ENCODE measurements at regions of chr7 and their contacts with region 1.

Region 1: DNA sequence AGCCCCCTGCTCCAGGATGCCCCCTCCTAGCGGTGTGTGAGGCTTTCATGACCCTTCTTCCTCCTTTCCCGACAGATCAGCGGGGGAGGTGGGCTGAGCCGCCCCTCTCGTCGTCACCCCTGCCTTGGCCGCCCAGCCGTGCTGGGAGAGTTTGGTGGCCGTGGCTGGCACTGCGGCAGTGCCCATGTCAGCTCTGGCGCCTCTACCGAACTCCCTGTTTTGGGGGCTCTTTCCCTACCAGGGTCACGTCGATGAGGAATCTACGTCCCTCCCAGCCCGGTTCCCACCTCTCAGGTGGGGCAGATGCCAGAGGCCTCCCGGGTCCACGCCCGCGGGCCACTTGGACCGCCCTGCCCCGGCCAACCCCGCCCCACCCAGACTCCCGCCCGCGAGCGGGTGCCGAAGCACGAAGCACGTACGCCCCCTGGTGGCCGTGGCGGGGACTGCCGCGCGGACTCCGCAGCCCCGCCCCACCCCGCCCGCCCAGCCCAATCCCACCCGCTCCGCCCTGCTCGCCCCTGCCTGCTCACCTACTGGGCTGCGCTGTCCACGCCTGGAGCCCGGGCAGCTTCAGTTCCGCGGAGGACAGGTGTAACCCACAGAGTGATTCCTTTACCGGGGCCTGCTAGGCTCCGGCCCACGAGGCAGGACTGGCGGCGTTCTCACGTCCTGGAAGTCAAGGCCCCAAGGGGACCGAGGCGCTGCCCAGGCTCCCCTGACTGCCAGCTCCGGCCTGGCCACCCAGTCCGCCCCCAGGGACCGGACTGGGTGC is 127.1 kb downstream of the UBE2H start:
- DNase-seq: peak; percentile 94
- ATAC-seq: peak; percentile 88
- H3K4me3 Mint-ChIP-seq: peak overlapping the region; percentile 90
- H3K27ac Mint-ChIP-seq: peak overlapping the region; percentile 50
- H3K4me1 Mint-ChIP-seq: peaks cover 18% of the 10 kb centered on the region
- H3K27me3 Mint-ChIP-seq: peaks cover 4% of the 10 kb centered on the region
- CTCF ChIP-seq: peak; percentile 43

Region 2: GRCh38 chr7:129224251-129225205 is 601.2 kb before region 1 on chr7 and contains the start of gene AHCYL2:
- CTCF ChIA-PET with region 1: no interaction called
- POLR2A ChIA-PET with region 1: interaction called, 3 read pairs
- intact Hi-C with region 1: loop called (anchors 1 kb)
- DNase-seq: peak; percentile 95
- ATAC-seq: peak; percentile 88
- H3K4me3 Mint-ChIP-seq: peak within 1 kb of the TSS; percentile 95
- H3K27ac Mint-ChIP-seq: peak within 1 kb of the TSS; percentile 97
- H3K4me1 Mint-ChIP-seq: peaks cover 33% of the 10 kb centered on the region
- H3K27me3 Mint-ChIP-seq: no peaks in the 10 kb centered on the region
- CTCF ChIP-seq: no peak
- total RNA-seq, gene AHCYL2: 10.9 and 11.6 TPM in 2 replicates

Region 3: GRCh38 chr7:129367700-129368388 is 457.8 kb before region 1 on chr7:
- CTCF ChIA-PET with region 1: interaction called, 12 read pairs
- POLR2A ChIA-PET with region 1: no interaction called
- intact Hi-C with region 1: loop called (anchors 2 kb)
- DNase-seq: peak; percentile 50
- ATAC-seq: peak; percentile 85
- H3K4me3 Mint-ChIP-seq: peak overlapping the region; percentile 61
- H3K27ac Mint-ChIP-seq: peak overlapping the region; percentile 46
- H3K4me1 Mint-ChIP-seq: peaks cover 27% of the 10 kb centered on the region
- H3K27me3 Mint-ChIP-seq: no peaks in the 10 kb centered on the region
- CTCF ChIP-seq: no peak

Region 4: GRCh38 chr7:129578829-129579228 is 246.9 kb before region 1 on chr7:
- CTCF ChIA-PET with region 1: interaction called, 6 read pairs
- POLR2A ChIA-PET with region 1: no interaction called
- intact Hi-C with region 1: loop called (anchors 2 kb)
- DNase-seq: no peak
- ATAC-seq: no peak
- H3K4me3 Mint-ChIP-seq: no peak overlapping the region
- H3K27ac Mint-ChIP-seq: no peak overlapping the region
- H3K4me1 Mint-ChIP-seq: no peaks in the 10 kb centered on the region
- H3K27me3 Mint-ChIP-seq: no peaks in the 10 kb centered on the region
- CTCF ChIP-seq: no peak

Region 5: DNA sequence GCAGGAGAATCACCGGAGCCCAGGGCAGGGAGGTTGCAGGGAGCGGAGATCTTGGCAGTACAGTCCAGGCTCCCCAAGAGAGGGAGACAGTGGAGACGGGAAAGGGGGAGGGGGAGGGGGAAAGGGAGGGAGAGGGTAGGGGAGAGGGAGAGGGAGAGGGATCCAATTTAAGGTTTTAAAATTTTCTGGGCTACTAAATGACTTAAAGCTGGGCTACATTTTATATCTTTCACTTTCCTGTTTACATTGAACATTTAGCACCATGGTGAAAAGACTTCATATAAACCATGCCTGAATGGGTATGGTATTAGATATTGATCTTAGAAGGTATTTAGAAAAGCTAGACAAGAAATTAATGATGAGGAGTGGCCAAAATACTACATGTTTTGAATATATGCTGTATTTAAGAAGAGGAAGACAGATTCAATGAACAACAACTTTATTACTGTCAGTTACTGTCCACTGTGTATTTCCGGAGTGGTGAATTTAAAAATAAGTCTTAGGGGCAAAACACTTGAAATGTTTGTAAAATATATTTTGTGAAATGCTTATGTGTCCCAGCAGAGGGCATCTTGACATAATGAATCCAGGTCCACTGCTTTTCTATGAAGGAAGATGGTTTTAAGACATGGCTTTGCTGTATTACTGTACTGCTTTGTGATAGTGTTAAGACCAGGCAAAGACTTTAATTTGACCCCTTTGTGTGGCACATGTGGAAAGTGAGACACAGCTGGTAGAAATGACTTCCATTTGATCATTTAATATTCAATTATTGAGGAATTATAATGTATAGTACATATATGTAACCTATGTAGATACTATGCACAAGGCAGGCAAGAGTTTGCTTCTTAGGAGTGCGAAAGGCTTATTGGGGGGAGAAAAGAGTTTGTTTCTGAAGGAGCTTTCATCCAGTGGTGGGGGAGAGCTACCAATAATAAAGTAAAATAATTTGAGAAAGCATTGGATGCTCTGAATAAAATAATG is 161.4 kb before region 1 on chr7:
- CTCF ChIA-PET with region 1: interaction called, 8 read pairs
- POLR2A ChIA-PET with region 1: no interaction called
- intact Hi-C with region 1: loop called (anchors 1 kb)
- DNase-seq: no peak
- ATAC-seq: no peak
- H3K4me3 Mint-ChIP-seq: no peak overlapping the region
- H3K27ac Mint-ChIP-seq: no peak overlapping the region
- H3K4me1 Mint-ChIP-seq: no peaks in the 10 kb centered on the region
- H3K27me3 Mint-ChIP-seq: no peaks in the 10 kb centered on the region
- CTCF ChIP-seq: no peak

Region 6: DNA sequence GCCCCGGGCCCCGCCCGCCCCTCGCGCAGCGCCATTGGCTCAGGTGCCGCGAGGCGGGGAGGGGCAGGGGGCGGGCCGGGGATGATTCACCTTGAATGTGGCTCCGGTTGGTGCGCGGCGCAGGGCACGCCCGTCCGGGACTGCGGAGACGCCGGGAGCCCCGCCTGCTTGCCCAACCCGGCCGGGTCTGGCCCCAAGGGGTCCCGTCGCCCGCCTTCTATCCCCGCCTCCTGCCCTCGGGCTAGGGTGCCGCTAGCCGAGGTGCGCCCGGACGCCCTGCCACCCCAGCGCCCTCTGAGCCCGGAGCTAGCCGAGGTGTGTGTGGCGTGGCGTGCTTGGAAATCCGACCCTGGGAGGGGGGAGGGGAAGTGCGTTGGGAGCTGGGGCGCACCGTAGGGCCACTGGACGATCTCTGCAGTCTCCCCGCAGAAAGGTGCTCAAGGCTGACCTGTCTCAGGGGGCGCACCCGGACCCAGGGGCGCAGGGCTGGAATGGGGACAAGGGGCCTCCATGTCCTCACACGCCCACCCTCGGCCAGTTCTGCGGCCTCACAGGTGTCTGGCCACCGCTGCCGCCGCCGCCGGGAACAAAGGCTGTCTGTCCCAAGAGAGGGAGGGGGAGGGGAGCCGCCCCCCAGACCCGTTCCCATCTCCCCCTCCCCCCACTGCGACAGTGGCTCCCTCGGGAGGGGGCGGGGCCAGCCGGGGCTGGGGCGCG is 45.3 kb before region 1 on chr7:
- CTCF ChIA-PET with region 1: no interaction called
- POLR2A ChIA-PET with region 1: no interaction called
- intact Hi-C with region 1: loop called (anchors 2 kb)
- DNase-seq: peak; percentile 62
- ATAC-seq: peak; percentile 79
- H3K4me3 Mint-ChIP-seq: peak overlapping the region; percentile 71
- H3K27ac Mint-ChIP-seq: no peak overlapping the region
- H3K4me1 Mint-ChIP-seq: peaks cover 38% of the 10 kb centered on the region
- H3K27me3 Mint-ChIP-seq: peaks cover 41% of the 10 kb centered on the region
- CTCF ChIP-seq: no peak

Measured in activated B cell treated with CpG ODN at 0.5 μM for 24 hours (primary cell).